ENCODE measurements at regions of chr7 and their contacts with region 1.

Region 1: GRCh38 chr7:142338633-142339501 is 81.0 kb upstream of the PRSS58 start:
- DNase-seq: no peak
- H3K4me3 ChIP-seq: no peak overlapping the region
- H3K27ac ChIP-seq: no peak overlapping the region
- H3K4me1 ChIP-seq: no peaks in the 10 kb centered on the region
- H3K27me3 ChIP-seq: no peaks in the 10 kb centered on the region
- CTCF ChIP-seq: peak; percentile 42 to 55

Region 2: DNA sequence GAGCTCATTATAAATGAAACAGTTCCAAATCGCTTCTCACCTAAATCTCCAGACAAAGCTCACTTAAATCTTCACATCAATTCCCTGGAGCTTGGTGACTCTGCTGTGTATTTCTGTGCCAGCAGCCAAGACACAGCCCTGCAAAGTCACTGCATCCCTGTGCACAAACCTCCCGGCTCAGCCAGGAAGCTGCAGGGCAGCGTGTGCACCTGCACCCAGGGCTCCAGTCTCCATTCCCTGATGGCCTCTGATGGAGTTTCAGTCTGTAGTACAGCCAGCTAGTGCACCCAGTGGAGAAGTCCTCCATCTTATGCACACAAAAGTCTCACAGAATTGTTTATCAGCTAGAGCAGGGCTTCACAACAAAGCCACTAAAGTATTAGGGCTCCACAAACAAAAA is 29.9 kb before region 1 on chr7:
- CTCF ChIA-PET with region 1: no interaction called
- dilution Hi-C with region 1: no loop called
- in situ Hi-C with region 1: no loop called
- intact Hi-C with region 1: loop called (anchors 1 kb)
- DNase-seq: no peak
- H3K4me3 ChIP-seq: no peak overlapping the region
- H3K27ac ChIP-seq: no peak overlapping the region
- H3K4me1 ChIP-seq: no peaks in the 10 kb centered on the region
- H3K27me3 ChIP-seq: peaks cover 12% of the 10 kb centered on the region
- CTCF ChIP-seq: no peak

Region 3: GRCh38 chr7:142391191-142391992 is 52.5 kb after region 1 on chr7:
- CTCF ChIA-PET with region 1: no interaction called
- dilution Hi-C with region 1: no loop called
- in situ Hi-C with region 1: no loop called
- intact Hi-C with region 1: no loop called
- DNase-seq: peak; percentile 8
- H3K4me3 ChIP-seq: no peak overlapping the region
- H3K27ac ChIP-seq: no peak overlapping the region
- H3K4me1 ChIP-seq: no peaks in the 10 kb centered on the region
- H3K27me3 ChIP-seq: no peaks in the 10 kb centered on the region
- CTCF ChIP-seq: peak; percentile 30 to 34

Measured in mammary epithelial cell (primary cell).